ENCODE measurements at regions of chr1 and their contacts with region 1.

Region 1: GRCh38 chr1:21289700-21290545 is at the start of gene ECE1:
- DNase-seq: peak; percentile 78
- H3K4me3 Mint-ChIP-seq: peak within 1 kb of the TSS; percentile 93
- H3K27ac Mint-ChIP-seq: peak within 1 kb of the TSS; percentile 93
- H3K4me1 Mint-ChIP-seq: peaks cover 62% of the 10 kb centered on the region
- H3K27me3 Mint-ChIP-seq: no peaks in the 10 kb centered on the region

Region 2: GRCh38 chr1:21324368-21325141 is 34.6 kb after region 1 on chr1:
- CTCF ChIA-PET with region 1: interaction called, 38 read pairs
- DNase-seq: peak; percentile 65
- H3K4me3 Mint-ChIP-seq: peak overlapping the region; percentile 45
- H3K27ac Mint-ChIP-seq: peak overlapping the region; percentile 92
- H3K4me1 Mint-ChIP-seq: peaks cover 81% of the 10 kb centered on the region
- H3K27me3 Mint-ChIP-seq: no peaks in the 10 kb centered on the region

Region 3: GRCh38 chr1:21334214-21335087 is 44.5 kb after region 1 on chr1:
- CTCF ChIA-PET with region 1: interaction called, 16 read pairs
- DNase-seq: peak; percentile 88
- H3K4me3 Mint-ChIP-seq: peak overlapping the region; percentile 72
- H3K27ac Mint-ChIP-seq: peak overlapping the region; percentile 96
- H3K4me1 Mint-ChIP-seq: peaks cover 91% of the 10 kb centered on the region
- H3K27me3 Mint-ChIP-seq: no peaks in the 10 kb centered on the region

Region 4: GRCh38 chr1:21451212-21451812 is 161.4 kb after region 1 on chr1:
- CTCF ChIA-PET with region 1: no interaction called
- DNase-seq: no peak
- H3K4me3 Mint-ChIP-seq: no peak overlapping the region
- H3K27ac Mint-ChIP-seq: no peak overlapping the region
- H3K4me1 Mint-ChIP-seq: peaks cover 22% of the 10 kb centered on the region
- H3K27me3 Mint-ChIP-seq: no peaks in the 10 kb centered on the region

Region 5: DNA sequence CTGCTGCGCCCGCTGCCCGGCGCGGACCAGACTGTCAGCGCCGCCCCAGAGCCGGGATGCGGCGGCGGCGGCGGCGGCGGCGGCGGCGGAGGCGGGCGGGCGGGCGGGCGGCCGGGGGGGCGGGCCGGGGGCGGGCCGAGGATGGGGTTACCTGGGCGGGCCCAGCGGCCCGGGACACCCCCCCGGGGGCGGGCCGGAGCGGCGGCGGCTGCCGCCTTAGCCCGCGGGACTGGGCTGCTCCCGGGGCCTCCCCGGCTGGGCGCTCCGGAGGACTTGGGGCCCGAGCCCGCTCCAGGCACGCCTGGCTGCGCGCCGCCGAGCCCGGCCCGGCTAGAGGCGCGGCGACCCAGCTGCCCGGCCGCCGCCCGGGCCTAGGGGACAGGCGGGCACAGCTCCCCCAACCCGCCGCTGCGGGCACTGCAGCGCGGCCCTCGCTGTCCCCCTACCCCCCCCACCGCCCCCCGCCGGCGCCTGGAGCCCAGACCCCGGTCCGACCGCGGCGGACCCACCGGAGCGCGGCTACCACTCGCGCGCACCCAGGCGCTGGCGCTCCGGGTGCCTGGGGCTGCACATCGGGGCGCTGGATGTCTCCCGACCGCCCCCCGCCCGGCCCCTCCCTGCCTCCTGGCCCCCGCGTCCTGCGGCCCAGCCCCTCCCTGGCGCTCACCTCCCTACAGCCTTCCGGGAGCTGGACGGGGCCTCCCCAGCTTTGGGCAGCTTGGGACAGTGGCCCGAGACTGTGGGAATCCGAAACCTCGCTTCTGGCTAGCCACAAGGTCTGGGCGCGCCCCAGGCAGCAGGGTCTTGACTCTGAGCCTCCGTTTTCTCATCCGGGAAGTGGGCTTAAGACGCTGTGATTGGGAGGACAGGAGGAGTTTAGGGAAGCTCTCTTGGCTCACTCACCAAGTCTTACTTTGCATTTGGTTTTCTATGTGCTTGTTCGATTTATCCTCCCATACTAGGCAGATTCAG is 853.4 kb after region 1 on chr1 and contains the start of gene WNT4:
- CTCF ChIA-PET with region 1: no interaction called
- DNase-seq: peak; percentile 44
- H3K4me3 Mint-ChIP-seq: peak within 1 kb of the TSS; percentile 65
- H3K27ac Mint-ChIP-seq: no peak within 1 kb of the TSS
- H3K4me1 Mint-ChIP-seq: peaks cover 7% of the 10 kb centered on the region
- H3K27me3 Mint-ChIP-seq: peaks cover 86% of the 10 kb centered on the region